ENCODE measurements at regions of chr15 and their contacts with region 1.

Region 1: DNA sequence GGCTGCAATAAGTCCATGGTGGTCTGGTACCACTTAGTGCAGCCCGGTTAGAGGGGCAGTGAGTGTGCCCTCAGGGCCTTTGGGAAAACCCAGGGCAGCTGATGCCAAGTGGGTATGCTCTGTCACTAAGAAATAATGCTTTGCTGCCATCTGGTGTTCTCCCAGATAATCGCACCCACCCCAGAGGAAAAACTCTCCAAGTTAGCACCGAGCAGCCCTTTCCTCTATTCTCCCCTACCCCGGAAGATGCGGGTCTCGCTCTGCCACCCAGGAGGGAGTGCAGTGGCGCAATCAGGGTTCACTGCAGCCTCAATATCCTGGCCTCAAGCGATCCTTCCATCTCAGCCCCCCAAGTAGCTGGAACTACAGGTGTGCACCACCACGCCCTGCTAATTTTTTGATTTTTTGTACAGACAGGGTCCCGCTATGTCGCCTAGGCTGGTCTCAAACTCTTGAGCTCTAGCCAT is 21.3 kb upstream of the DAPK2 start:
- DNase-seq: peak; percentile 61 to 80
- ATAC-seq: peak; percentile 77 to 88
- H3K4me3 ChIP-seq: no peak overlapping the region
- H3K27ac ChIP-seq: peak overlapping the region in 1 of 2 experiments; percentile 44; a peak in 2 of 6 replicates
- H3K4me1 ChIP-seq: peaks cover 24% of the 10 kb centered on the region
- CTCF ChIP-seq: peak; percentile 93
- EP300 ChIP-seq: no peak
- POLR2A ChIP-seq: no peak
- RAD21 ChIP-seq: peak; percentile 97 to 98

Region 2: GRCh38 chr15:63610200-63610841 is 457.3 kb before region 1 on chr15:
- CTCF ChIA-PET with region 1: interaction called, 166 read pairs
- POLR2A ChIA-PET with region 1: no interaction called
- DNase-seq: peak; percentile 85 to 93
- ATAC-seq: peak; percentile 92 to 96
- H3K4me3 ChIP-seq: no peak overlapping the region
- H3K27ac ChIP-seq: peak overlapping the region; percentile 18 to 21; a peak in 3 of 6 replicates
- H3K4me1 ChIP-seq: peaks cover 17% of the 10 kb centered on the region
- CTCF ChIP-seq: peak; percentile 96
- EP300 ChIP-seq: no peak
- POLR2A ChIP-seq: no peak
- RAD21 ChIP-seq: peak; percentile 94 to 95

Region 3: GRCh38 chr15:63826528-63826927 is 241.1 kb before region 1 on chr15:
- CTCF ChIA-PET with region 1: interaction called, 11 read pairs
- POLR2A ChIA-PET with region 1: no interaction called
- DNase-seq: peak in 1 of 2 experiments; percentile 62
- ATAC-seq: peak in 1 of 2 experiments; percentile 45; a peak in 1 of 6 replicates
- H3K4me3 ChIP-seq: no peak overlapping the region
- H3K27ac ChIP-seq: no peak overlapping the region
- H3K4me1 ChIP-seq: no peaks in the 10 kb centered on the region
- CTCF ChIP-seq: peak; percentile 22; the same call in 1 of the 3 replicates
- EP300 ChIP-seq: no peak
- POLR2A ChIP-seq: no peak
- RAD21 ChIP-seq: peak in 1 of 2 experiments; percentile 28; a peak in 2 of 5 replicates

Region 4: DNA sequence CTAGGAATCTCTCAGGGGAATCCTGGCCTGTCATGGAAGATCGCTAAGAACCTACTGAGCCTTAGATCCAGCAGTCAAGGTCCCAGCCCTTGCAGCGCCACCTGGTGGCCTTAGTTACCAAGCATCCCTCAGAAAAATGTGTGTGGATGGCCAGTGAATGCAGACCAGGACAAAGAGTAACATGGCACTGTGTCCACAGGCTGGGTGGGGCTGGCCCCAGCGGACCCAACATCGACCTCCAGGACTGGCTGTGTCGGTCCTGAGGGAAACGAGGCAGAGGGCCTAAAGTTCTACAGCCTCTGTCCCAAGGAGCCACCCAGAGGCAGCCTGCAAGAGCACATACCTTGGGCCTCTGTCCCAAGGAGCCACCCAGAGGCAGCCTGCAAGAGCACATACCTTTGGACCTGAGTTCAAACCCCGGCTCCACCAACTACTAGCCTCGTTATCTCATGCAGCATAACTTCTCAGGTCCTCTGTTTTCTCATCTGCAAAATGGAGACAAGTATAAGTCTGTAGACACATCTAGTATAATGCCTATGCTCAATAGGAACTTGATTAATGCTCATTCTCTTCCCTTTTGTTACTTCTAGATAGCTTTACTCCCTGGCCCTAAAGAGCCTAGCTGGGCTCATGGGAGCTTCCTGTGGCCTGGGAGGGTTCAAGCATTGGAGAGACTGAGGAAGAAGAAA is 176.4 kb before region 1 on chr15:
- CTCF ChIA-PET with region 1: interaction called, 19 read pairs
- POLR2A ChIA-PET with region 1: no interaction called
- DNase-seq: peak; percentile 87 to 88
- ATAC-seq: peak; percentile 80 to 96
- H3K4me3 ChIP-seq: no peak overlapping the region
- H3K27ac ChIP-seq: no peak overlapping the region
- H3K4me1 ChIP-seq: peaks cover 3% of the 10 kb centered on the region; the same call in 2 of the 3 replicates
- CTCF ChIP-seq: peak; percentile 98
- EP300 ChIP-seq: no peak
- POLR2A ChIP-seq: no peak
- RAD21 ChIP-seq: peak; percentile 79 to 83

Region 5: DNA sequence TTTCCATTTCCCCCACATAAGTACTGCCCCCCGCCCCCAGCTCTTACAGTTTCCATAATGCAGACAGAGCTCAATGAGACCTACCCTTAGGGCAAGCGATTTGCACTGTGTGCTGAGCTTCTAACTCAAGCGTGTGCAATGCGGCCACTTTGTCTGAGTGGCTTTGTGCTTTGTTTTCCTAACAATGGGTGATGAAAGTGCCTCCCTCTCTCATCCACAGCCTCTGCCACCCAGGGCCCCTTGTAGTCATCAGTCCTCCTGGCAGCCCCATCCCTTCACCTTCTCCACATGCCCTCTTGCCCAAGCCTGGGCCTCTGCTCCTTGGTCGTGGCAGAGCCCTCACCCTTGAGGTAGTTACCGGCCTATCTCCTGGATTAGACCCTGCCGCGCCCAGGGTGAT is 38.5 kb before region 1 on chr15:
- CTCF ChIA-PET with region 1: interaction called, 12 read pairs
- POLR2A ChIA-PET with region 1: no interaction called
- DNase-seq: no peak
- ATAC-seq: peak in 1 of 2 experiments; percentile 22; a peak in 2 of 6 replicates
- H3K4me3 ChIP-seq: no peak overlapping the region
- H3K27ac ChIP-seq: no peak overlapping the region
- H3K4me1 ChIP-seq: peaks cover 15% of the 10 kb centered on the region; the same call in 2 of the 3 replicates
- CTCF ChIP-seq: no peak
- EP300 ChIP-seq: no peak
- POLR2A ChIP-seq: no peak
- RAD21 ChIP-seq: no peak

Region 6: GRCh38 chr15:64093627-64094417 is 26.2 kb after region 1 on chr15 and contains the start of gene CIAO2A:
- CTCF ChIA-PET with region 1: interaction called, 11 read pairs
- POLR2A ChIA-PET with region 1: interaction called, 14 read pairs
- DNase-seq: peak; percentile 96 to 100
- ATAC-seq: peak; percentile 82 to 90
- H3K4me3 ChIP-seq: peak within 1 kb of the TSS; percentile 68
- H3K27ac ChIP-seq: peak within 1 kb of the TSS; percentile 85 to 86
- H3K4me1 ChIP-seq: peaks cover 32% of the 10 kb centered on the region
- CTCF ChIP-seq: no peak
- EP300 ChIP-seq: no peak
- POLR2A ChIP-seq: peak; percentile 82
- RAD21 ChIP-seq: no peak
- polyA plus RNA-seq, gene CIAO2A: 149 and 231 TPM in 2 replicates